HEK293 (cell line): ENCODE measurements at regions of chr5 and their contacts with region 1.

Region 1: DNA sequence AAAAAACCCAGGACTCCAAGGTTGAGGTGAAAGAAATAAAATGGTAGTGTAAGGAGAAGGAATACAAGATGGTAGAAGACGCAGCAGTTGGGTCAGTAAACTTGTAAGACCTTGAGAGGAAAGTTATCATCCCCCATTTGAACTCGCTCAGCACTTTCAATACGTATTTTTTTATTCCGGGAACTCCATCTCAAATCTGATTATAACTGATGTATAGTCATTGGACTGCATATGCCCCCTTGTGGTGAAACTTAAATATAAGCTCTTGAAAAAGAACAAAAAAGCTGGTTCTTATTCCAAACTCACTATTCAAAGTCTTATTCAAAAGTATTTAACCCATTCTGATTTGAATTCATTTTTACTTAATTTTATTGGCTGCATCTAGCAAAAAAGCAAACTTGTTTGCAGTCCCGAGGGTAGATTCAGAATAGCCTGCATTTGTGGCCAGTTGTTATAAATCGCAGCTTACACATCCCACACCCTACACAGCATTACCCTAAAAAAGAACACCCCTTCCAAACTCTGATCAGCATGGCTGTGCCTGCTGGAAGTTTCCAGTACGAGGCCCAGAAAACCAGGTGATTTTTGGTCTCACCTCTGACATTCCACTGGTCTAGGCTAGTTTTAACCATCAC is 118.0 kb downstream of the ESM1 start:
- H3K4me3 ChIP-seq: no peak overlapping the region
- H3K27ac ChIP-seq: no peak overlapping the region
- H3K4me1 ChIP-seq: no peaks in the 10 kb centered on the region
- CTCF ChIP-seq: 0 out of 2 replicates have a peak, but pooled peaks have one; percentile 22

Region 2: DNA sequence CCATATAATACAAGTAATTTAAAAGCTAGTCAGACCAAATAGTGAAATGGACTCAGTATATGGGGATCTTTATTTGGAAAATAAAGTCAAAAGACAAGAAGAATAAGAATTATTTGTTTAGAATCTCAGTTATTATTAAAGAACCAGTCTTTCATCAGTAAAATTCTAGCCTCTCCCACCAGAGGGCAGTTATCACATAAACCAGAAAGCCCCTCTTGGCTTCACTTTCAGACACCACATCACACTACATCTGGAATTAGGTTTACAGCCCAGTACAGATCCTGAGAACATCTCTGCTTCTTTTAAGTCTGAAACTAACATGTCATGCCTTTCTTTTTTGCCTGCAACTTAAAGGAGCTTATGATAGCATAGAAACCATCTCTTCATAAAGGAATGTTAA is 424.2 kb before region 1 on chr5:
- CTCF ChIA-PET with region 1: interaction called, 16 read pairs
- POLR2A ChIA-PET with region 1: no interaction called
- H3K4me3 ChIP-seq: no peak overlapping the region
- H3K27ac ChIP-seq: no peak overlapping the region
- H3K4me1 ChIP-seq: no peaks in the 10 kb centered on the region
- CTCF ChIP-seq: 0 out of 2 replicates have a peak, but pooled peaks have one; percentile 20

Region 3: DNA sequence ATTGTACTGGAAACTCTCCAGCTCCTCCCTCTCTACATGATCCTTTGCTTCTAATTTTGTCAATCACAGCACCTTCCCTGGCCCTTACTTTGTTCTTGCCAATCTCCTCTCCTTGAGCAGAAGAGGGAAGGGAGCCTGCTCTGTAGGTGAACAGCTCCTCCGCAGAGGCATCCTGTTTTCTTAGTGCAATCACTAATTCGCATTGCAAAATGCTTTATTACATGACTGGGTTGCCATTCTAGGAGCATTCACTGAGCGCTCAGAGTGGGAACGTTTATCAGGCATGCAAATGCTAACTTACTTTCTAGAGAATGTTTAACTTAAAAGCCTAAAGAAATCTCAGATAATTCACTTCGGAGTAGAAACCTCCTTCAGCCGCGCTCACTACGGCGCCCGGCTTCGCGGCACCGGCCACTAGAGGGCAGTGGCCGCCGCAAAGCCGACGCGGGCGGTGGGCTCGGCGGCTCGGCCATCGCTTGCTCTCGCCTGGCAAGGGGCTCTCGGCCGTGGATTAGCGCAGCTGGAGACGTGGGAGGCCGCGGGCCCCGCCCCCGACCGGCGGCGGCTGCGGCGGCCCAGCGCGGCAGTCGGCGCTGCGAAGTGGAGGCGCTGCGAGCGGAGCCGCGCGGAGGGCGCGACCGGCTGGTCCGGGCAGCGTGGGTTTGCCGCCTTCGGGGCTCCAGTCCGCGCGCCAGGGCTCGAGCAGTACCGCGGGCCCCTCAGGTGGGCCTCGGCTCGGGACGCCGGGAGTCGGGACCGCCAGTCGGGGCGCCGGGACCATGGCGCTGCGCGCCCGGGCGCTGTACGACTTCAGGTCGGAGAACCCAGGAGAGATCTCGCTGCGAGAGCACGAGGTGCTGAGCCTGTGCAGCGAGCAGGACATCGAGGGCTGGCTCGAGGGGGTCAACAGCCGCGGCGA is 350.0 kb before region 1 on chr5 and contains the start of gene SNX18:
- CTCF ChIA-PET with region 1: interaction called, 45 read pairs
- POLR2A ChIA-PET with region 1: no interaction called
- H3K4me3 ChIP-seq: peak within 1 kb of the TSS; percentile 83
- H3K27ac ChIP-seq: peak within 1 kb of the TSS; percentile 86
- H3K4me1 ChIP-seq: peaks cover 7% of the 10 kb centered on the region; the same call in 1 of the 2 replicates
- CTCF ChIP-seq: peak; percentile 90

Region 4: DNA sequence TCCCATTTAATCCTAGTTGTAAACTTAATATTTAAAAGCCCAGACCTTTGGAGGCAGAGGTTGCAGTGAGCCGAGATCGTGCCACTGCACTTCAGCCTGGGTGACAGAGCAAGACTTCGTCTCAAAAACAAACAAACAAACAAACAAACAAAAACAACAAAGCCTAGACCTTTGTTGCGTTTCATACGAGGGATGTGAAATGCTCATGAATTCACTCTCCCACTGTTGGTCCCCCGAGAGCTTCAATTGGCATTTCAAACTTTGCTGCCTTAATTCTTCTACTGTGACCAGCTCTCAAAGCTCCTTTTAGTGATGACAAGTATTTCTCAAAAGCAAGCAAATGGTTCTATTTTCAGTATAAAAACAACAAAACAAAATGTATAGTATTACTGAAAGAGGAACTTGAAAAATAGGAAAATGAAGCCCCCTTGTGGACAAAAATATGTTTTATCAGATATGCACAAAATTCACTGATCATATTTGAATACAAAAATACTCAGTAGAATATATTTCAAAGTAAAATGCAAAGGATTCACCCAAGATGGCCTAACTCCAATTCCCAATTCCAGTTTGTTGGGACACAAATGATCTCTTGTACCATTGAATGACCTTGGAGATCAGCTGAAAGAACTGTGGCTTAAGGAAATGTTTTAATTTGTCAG is 22.4 kb before region 1 on chr5:
- CTCF ChIA-PET with region 1: interaction called, 17 read pairs
- POLR2A ChIA-PET with region 1: no interaction called
- H3K4me3 ChIP-seq: no peak overlapping the region
- H3K27ac ChIP-seq: no peak overlapping the region
- H3K4me1 ChIP-seq: no peaks in the 10 kb centered on the region
- CTCF ChIP-seq: no peak

Region 5: DNA sequence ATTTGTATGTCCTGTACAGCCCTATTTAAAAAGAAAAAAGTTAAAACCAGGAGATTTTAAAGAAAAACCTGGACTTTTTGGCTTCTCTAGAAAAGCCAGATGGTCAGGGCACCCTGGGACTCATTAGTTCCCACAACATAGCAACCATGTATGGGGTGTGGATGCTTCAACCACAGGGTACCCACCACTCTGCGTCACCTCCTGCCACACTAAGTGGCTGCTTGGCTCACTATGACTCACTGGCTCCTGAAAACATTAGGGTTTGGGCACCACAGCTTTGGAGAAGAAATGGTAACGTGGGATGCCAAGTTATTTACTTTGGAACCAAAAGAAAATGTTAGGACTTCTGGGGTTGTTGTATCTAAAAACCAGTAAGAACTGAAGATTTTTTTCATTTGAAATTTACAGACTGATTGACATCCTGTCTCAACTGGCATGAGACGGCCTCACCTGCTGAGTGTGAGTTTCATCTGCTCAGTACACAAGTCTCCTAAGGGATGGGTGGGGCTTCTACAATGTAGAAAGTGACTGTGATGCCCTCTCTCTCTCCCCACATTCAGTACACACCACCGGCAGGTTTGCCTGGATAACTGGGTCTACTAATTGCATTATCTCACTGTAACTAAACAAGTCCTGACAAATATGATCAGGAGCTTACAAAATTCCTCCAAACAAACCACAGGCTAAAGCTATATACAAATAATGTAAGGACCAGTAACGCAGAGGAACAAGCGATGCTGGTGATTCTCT is 14.0 kb after region 1 on chr5:
- CTCF ChIA-PET with region 1: interaction called, 30 read pairs
- POLR2A ChIA-PET with region 1: no interaction called
- H3K4me3 ChIP-seq: no peak overlapping the region
- H3K27ac ChIP-seq: no peak overlapping the region
- H3K4me1 ChIP-seq: no peaks in the 10 kb centered on the region
- CTCF ChIP-seq: no peak

Region 6: DNA sequence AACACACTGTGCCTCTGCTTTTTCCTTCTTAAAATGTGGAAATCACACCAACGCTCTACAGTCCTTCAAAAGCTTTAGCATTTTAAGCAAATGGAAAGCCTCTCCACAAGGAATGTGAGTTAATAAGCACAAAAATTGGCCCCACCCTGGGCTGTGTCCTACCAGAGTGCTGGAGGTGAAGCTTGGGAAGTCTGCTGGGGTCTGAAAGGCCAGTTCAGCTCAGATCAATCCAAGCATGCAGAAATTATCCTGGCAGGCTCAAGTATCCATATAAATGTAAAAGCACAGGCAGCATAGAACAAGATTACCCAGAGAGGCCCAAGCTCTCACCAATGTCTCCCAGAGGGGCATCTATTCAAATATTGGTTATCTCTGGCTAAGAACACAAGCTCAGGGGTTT is 19.4 kb after region 1 on chr5:
- CTCF ChIA-PET with region 1: interaction called, 12 read pairs
- POLR2A ChIA-PET with region 1: no interaction called
- H3K4me3 ChIP-seq: no peak overlapping the region
- H3K27ac ChIP-seq: no peak overlapping the region
- H3K4me1 ChIP-seq: no peaks in the 10 kb centered on the region
- CTCF ChIP-seq: no peak

Region 7: DNA sequence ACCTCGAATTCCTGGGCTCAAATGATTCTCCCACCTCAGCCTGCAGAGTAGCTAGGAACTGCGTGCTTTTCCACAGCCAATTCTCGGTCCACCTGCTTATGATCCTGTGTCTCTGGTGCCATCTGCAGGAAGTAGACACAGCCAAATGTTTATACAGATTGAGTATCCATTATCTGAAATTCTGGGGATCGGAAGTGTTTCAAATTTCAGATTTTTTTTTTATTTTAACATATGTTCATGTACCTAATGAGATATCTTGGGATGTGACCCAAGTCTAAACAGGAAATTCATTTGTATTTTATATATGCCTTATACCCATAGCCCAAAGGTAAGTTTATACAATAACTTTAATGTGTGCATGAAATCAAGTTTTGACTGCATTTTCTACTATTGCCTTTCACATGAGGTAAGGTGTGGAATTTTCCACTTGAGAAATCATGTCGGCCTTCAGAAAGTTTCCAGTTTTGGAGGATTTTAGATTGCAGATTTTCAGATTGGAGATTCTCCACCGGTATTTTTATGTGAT is 28.5 kb after region 1 on chr5:
- CTCF ChIA-PET with region 1: interaction called, 16 read pairs
- POLR2A ChIA-PET with region 1: no interaction called
- H3K4me3 ChIP-seq: no peak overlapping the region
- H3K27ac ChIP-seq: no peak overlapping the region
- H3K4me1 ChIP-seq: no peaks in the 10 kb centered on the region
- CTCF ChIP-seq: peak; percentile 76